ENCODE measurements at regions of chr4 and their contacts with region 1.

Region 1: DNA sequence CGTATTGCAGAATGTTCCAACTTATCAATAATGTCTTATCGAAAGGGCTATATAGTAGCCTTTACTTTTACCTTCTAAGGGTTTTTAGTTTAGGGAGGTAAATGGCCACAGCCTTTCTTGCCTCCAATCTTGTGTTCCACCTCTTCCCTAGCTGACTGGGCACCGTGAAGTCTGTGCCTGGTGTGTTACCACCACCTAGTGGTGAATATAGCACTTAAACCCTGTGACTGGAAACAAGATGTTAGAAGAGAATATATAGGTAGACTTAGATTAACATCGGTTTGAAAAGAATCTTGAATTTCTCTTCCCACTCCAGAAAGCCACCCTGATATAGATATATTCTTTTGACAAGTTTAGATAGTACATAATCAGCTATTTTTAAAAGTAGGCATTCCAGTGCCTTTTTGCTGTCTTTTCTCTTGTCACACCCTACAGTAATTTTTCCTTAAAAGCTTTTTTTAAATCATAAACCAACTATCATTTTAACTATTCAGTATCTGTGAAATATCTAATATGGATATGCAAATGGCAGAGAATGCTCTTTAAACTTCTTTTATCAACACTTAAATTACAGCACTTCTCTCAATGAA is 27.8 kb upstream of the ADH7 start:
- DNase-seq: peak; percentile 62
- H3K4me3 ChIP-seq: no peak overlapping the region
- H3K27ac ChIP-seq: no peak overlapping the region
- H3K4me1 ChIP-seq: no peaks in the 10 kb centered on the region
- H3K27me3 ChIP-seq: no peaks in the 10 kb centered on the region
- CTCF ChIP-seq: peak; percentile 64

Region 2: GRCh38 chr4:99117876-99118693 is 344.9 kb before region 1 on chr4:
- intact Hi-C with region 1: loop called (anchors 2 kb)
- DNase-seq: no peak
- H3K4me3 ChIP-seq: no peak overlapping the region
- H3K27ac ChIP-seq: no peak overlapping the region
- H3K4me1 ChIP-seq: no peaks in the 10 kb centered on the region
- H3K27me3 ChIP-seq: no peaks in the 10 kb centered on the region
- CTCF ChIP-seq: no peak

Region 3: DNA sequence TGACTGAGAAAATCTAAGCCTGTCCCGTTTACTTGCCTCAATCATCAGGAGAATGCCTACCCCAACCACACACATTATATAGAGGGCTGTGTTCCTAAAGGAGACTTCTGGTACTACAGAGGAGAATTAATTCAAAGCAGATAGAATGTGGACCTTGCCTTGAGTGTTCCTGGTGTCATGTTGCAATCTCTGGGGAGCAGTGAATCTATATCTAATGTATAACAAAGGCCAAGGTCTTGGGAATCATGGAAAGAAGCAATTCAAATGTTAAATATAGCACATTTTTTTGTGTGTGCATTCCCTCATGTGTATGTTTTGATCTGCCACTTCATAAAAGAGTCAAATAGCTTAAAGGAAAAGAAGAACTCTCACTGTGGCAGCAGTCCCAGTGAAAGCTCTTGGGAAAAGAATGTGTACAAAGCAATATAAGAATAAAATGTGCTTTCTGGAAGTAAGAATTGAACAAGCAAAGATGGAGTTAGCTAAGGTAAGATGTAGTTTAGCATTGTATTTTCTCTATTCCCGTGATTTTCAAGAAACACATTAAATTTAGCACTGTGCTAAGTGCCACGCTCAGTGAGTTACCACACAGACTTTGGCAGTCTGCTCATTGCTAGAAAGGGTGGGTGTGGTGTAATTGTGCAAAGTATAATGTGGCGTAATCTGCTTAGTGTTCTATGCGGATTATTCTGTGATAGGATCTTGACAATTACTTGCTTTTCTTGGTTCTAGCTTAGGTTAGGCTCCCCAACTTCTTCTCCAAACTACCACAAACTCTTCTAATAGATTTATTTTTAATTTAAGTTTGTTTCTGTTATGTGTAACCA is 257.6 kb before region 1 on chr4:
- intact Hi-C with region 1: loop called (anchors 10 kb)
- DNase-seq: peak; percentile 39
- H3K4me3 ChIP-seq: no peak overlapping the region
- H3K27ac ChIP-seq: peak overlapping the region; percentile 1
- H3K4me1 ChIP-seq: peaks cover 5% of the 10 kb centered on the region
- H3K27me3 ChIP-seq: no peaks in the 10 kb centered on the region
- CTCF ChIP-seq: no peak